Activated CD4-positive, alpha-beta memory T cell treated with anti-CD3 and anti-CD28 coated beads, Interleukin-2, amount 10 ng/mL, durations not matched to agents 7 days and 5 days (primary cell): ENCODE measurements at regions of chr22 and their contacts with region 1.

Region 1: DNA sequence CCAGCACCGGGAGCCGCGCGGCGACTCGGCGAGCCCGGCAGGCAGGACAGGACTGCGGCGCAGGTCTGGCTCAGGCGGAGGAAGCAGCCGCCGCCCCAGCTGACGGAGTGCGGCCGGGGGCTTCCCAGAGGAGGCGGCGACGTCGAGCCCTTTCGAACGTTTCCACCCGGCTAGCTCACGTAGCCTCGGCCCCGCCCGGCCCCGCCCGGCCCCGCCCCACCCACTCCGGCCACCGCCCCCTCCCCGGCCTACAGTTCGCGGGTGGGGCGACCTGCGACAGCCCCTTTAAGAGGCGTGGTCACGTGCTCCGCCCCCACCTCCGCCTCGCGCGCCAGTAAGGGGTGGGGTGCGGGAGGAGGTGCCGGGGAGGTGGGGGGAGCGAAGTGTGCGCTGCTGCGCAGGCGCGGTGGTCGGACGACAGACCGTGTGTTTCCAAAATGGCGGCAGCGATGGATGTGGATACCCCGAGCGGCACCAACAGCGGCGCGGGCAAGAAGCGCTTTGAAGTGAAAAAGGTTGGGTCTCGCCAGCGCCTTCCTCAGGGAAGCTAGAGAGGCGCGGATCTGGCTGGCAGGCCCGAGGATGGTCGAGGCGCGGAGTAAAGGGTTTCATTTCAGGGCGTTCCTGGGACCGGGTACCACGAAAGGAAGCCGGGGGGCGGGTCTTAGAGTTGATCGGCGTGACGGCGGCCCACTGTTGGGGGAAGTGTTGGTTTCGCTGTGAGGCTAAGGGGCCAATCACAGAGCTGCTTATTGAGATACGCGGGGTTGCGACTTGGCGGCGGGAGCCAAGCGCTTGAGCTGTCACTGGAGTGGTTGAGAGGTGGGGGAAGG is at the start of gene RBX1:
- DNase-seq: peak; percentile 99
- H3K4me3 Mint-ChIP-seq: peak within 1 kb of the TSS; percentile 95
- H3K27ac Mint-ChIP-seq: peak within 1 kb of the TSS; percentile 98
- H3K4me1 Mint-ChIP-seq: peaks cover 45% of the 10 kb centered on the region
- H3K27me3 Mint-ChIP-seq: no peaks in the 10 kb centered on the region
- total RNA-seq, gene RBX1: 80.7 TPM

Region 2: DNA sequence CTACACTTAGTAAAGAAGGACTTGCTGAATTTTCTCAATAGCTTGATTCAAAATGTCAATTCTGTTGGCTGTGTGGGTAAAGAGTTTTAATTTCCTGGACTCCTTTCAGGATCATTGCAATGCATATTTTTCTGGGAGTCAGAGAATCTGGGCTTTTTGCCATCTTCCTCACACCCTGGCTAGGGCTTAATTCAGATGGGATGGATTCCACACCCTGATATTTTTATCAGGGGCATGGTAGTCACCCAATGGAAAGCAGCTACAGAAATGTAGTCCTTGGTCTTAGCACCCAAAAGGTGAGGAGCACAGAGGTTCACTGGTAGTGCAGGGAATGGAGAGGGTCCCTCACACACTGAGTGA is 501.5 kb before region 1 on chr22:
- CTCF ChIA-PET with region 1: no interaction called
- POLR2A ChIA-PET with region 1: no interaction called
- DNase-seq: no peak
- H3K4me3 Mint-ChIP-seq: no peak overlapping the region
- H3K27ac Mint-ChIP-seq: no peak overlapping the region
- H3K4me1 Mint-ChIP-seq: peaks cover 37% of the 10 kb centered on the region
- H3K27me3 Mint-ChIP-seq: no peaks in the 10 kb centered on the region

Region 3: GRCh38 chr22:40922484-40923303 is 28.5 kb before region 1 on chr22:
- CTCF ChIA-PET with region 1: interaction called, 30 read pairs
- POLR2A ChIA-PET with region 1: interaction called, 31 read pairs
- DNase-seq: no peak
- H3K4me3 Mint-ChIP-seq: no peak overlapping the region
- H3K27ac Mint-ChIP-seq: peak overlapping the region; percentile 31
- H3K4me1 Mint-ChIP-seq: peaks cover 4% of the 10 kb centered on the region
- H3K27me3 Mint-ChIP-seq: no peaks in the 10 kb centered on the region

Region 4: GRCh38 chr22:40965936-40966725 is 15.0 kb after region 1 on chr22:
- CTCF ChIA-PET with region 1: interaction called, 3 read pairs
- POLR2A ChIA-PET with region 1: interaction called, 29 read pairs
- DNase-seq: no peak
- H3K4me3 Mint-ChIP-seq: no peak overlapping the region
- H3K27ac Mint-ChIP-seq: peak overlapping the region; percentile 59
- H3K4me1 Mint-ChIP-seq: peaks cover 20% of the 10 kb centered on the region
- H3K27me3 Mint-ChIP-seq: no peaks in the 10 kb centered on the region

Region 5: DNA sequence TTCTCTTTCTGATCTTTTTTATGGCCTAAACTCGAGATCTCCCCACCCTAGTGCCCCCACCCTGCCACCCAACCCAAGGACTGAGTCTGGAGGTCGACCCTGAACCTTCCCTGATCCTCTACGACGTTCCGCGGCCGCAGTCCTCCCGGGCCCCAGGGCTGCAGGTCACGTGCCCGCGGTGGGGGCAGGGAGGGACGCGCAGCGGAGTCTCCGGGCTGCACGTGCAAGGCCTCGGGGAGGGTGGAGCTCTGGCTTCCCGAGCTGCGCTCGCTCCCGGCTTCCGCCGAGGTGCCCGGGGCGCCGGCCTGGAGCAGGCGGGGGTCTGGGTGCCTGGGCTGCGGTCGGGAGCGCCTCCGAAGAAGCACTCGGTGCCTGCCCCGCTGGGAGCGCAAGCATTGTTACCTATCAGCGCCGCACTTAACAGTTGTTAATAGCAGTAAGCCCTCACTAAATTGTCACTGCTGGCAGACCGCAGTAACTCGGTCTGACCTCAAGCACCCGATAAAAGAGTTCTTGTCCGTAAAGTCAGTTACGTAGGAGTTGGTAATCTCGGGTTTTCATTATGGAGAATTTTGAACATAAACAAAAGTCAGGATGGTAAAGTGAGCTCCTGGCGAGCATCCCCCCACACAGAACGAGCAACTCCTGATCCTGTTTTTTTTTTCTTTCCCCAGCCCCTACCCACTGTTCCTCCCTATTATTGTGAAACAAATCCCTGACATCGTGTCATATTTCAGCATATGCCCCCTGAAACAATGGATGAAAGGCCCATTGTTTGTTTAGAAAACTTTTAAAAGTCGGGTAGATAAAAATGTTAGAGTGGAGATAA is 71.5 kb after region 1 on chr22:
- CTCF ChIA-PET with region 1: interaction called, 5 read pairs
- POLR2A ChIA-PET with region 1: interaction called, 74 read pairs
- DNase-seq: peak; percentile 86
- H3K4me3 Mint-ChIP-seq: peak overlapping the region; percentile 75
- H3K27ac Mint-ChIP-seq: peak overlapping the region; percentile 69
- H3K4me1 Mint-ChIP-seq: peaks cover 22% of the 10 kb centered on the region
- H3K27me3 Mint-ChIP-seq: peaks cover 9% of the 10 kb centered on the region

Region 6: DNA sequence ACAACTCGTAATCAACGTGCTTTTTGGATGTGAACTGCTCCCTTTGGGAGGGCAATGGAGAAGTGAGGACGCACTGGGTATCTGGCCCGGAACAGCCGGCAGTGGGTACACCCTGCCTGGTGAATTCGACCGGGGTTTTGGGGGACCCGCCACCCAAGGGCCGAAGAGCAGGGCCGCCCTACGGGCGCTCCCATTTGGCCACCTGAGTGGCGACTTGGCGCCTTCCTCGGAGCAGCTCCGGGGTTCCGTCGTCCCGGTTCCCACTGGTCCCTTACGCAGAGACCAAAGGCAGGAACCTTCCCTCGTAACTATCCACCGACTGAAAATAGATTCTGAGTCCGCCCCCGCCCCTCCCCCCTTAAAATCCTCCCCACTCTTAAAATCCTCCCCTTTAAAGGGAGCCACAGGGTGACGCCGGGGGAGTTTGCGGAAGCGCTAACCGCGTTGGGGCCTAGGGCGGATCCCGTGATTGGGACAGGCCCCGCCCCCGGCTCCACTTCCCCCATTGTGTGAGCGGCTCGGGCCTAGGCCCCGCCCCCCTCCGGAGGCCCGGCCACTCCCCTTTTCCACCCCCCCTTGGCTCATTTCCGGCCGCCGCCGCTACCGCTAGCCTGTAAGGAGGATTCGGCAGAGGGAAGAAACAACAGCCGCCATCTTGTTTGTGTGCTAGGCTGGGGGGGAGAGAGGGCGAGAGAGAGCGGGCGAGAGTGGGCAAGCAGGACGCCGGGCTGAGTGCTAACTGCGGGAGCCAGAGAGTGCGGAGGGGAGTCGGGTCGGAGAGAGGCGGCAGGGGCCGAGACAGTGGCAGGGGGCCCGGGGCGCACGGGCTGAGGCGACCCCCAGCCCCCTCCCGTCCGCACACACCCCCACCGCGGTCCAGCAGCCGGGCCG is 140.2 kb after region 1 on chr22:
- CTCF ChIA-PET with region 1: interaction called, 24 read pairs
- POLR2A ChIA-PET with region 1: interaction called, 244 read pairs
- DNase-seq: peak; percentile 100
- H3K4me3 Mint-ChIP-seq: peak overlapping the region; percentile 92
- H3K27ac Mint-ChIP-seq: peak overlapping the region; percentile 99
- H3K4me1 Mint-ChIP-seq: peaks cover 29% of the 10 kb centered on the region
- H3K27me3 Mint-ChIP-seq: no peaks in the 10 kb centered on the region

Region 7: GRCh38 chr22:41285820-41286638 is 334.9 kb after region 1 on chr22 and contains the start of gene RANGAP1:
- CTCF ChIA-PET with region 1: interaction called, 3 read pairs
- POLR2A ChIA-PET with region 1: interaction called, 18 read pairs
- DNase-seq: peak; percentile 99
- H3K4me3 Mint-ChIP-seq: peak within 1 kb of the TSS; percentile 94
- H3K27ac Mint-ChIP-seq: peak within 1 kb of the TSS; percentile 99
- H3K4me1 Mint-ChIP-seq: peaks cover 41% of the 10 kb centered on the region
- H3K27me3 Mint-ChIP-seq: no peaks in the 10 kb centered on the region
- total RNA-seq, gene RANGAP1: 98.7 to 99.7 TPM